Activated CD4-positive, alpha-beta memory T cell treated with anti-CD3 and anti-CD28 coated beads, Interleukin-2, amount 10 ng/mL, durations not matched to agents 7 days and 5 days (primary cell): ENCODE measurements at regions of chr11 and their contacts with region 1.

Region 1: DNA sequence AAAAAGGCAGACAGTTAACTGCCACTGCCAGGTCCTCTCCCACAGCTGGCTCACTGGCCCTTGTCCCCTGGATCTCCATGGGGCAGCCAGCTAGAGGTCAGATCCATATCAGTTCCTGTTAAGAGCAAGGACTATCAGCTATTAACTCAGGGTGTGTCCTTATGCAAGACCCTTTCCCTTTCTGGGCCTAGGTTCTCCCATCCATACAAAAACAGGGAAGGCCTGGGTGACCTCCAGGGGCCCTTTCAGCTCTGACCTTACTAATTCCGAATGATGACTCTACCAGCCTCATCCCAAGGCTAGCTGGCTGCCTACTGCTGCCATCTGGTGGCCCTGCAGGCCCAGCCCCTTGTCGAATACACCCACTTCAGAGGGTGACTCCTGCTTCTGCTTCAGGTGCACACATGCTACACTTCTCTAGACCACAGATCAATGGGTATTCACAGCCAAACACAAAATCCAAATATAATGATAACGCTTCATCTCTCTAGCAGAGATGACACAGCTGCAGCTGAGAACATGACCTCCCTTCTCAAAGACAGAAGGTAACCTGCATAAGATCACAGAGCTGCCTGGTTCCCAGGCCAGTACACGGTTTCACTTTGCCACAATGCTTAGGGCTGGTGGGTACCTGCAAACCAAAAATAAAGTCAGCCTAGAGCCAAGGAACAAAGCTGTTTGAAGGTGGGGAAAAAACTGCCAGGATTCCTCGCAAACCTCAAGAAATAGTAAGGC is 34.1 kb downstream of the SERGEF start:
- DNase-seq: peak; percentile 33
- H3K4me3 Mint-ChIP-seq: no peak overlapping the region
- H3K27ac Mint-ChIP-seq: no peak overlapping the region
- H3K4me1 Mint-ChIP-seq: no peaks in the 10 kb centered on the region
- H3K27me3 Mint-ChIP-seq: no peaks in the 10 kb centered on the region

Region 2: DNA sequence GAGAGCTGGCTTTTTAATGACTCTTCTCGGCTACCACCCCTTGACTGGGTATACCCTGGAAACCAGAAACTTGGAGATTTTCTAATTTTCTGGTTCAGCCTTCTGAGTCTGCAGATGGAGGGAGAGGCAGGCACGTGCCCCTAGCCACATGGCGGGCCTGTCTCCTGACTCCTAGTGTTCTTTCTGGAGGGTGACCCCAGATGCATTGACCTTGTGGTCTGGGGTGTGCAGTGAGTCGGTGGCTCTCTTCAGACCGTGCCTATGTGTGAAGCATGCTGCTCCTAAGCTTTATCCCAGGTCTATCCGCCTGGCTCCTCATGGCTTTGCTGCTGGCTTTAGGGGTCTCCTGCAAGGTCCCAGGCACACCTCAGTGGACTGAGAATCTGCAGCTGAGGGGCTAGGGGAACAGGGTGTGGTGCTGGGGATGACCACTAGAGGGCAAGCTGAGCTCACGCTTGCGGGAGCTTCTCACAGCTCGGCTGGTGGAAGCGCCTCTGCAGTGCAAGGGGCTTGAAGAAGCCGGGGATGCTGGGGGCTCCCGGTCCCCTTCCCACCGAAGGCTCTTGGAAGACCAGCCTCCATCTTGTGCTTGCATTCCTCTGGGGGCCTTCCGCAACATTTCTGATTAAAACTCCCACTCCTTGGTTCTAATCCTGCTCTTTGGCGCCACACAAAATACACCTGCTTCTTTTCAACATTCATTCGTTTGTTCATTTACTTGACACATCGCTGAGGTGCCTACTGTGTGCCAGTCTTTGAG is 379.8 kb before region 1 on chr11:
- CTCF ChIA-PET with region 1: interaction called, 12 read pairs
- POLR2A ChIA-PET with region 1: no interaction called
- DNase-seq: peak; percentile 69
- H3K4me3 Mint-ChIP-seq: no peak overlapping the region
- H3K27ac Mint-ChIP-seq: no peak overlapping the region
- H3K4me1 Mint-ChIP-seq: no peaks in the 10 kb centered on the region
- H3K27me3 Mint-ChIP-seq: no peaks in the 10 kb centered on the region

Region 3: DNA sequence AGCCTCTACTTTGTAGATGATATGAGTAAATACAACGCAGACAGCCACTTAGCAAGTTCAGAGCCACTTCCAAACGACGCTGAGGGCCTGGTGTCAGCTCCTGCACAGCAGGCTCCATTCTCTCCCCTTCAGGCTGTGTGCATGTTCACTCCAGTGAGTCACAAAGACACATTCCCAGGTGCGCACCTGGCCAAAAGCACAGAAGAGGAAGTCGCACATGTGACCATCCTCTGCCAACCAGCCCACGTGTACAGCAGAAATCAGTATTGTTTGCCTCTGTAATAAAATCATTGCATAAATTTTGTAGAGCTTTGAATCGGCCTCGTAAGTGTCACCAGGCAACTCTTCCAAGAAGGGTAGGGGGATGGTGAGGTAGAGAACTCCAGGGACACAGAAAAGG is 86.9 kb after region 1 on chr11:
- CTCF ChIA-PET with region 1: no interaction called
- POLR2A ChIA-PET with region 1: no interaction called
- DNase-seq: no peak
- H3K4me3 Mint-ChIP-seq: no peak overlapping the region
- H3K27ac Mint-ChIP-seq: no peak overlapping the region
- H3K4me1 Mint-ChIP-seq: no peaks in the 10 kb centered on the region
- H3K27me3 Mint-ChIP-seq: no peaks in the 10 kb centered on the region